PC-3 (cell line): ENCODE measurements at regions of chr3 and their contacts with region 1.

Region 1: GRCh38 chr3:179278932-179279693 is 28.2 kb upstream of the KCNMB3 start:
- DNase-seq: no peak
- ATAC-seq: no peak
- H3K4me3 ChIP-seq: no peak overlapping the region
- H3K27ac ChIP-seq: no peak overlapping the region
- H3K4me1 ChIP-seq: no peaks in the 10 kb centered on the region
- H3K27me3 ChIP-seq: no peaks in the 10 kb centered on the region
- CTCF ChIP-seq: no peak

Region 2: GRCh38 chr3:179174316-179174715 is 104.8 kb before region 1 on chr3:
- CTCF ChIA-PET with region 1: no interaction called
- POLR2A ChIA-PET with region 1: no interaction called
- intact Hi-C with region 1: no loop called
- DNase-seq: no peak
- ATAC-seq: no peak
- H3K4me3 ChIP-seq: no peak overlapping the region
- H3K27ac ChIP-seq: no peak overlapping the region
- H3K4me1 ChIP-seq: no peaks in the 10 kb centered on the region
- H3K27me3 ChIP-seq: no peaks in the 10 kb centered on the region
- CTCF ChIP-seq: no peak

Region 3: DNA sequence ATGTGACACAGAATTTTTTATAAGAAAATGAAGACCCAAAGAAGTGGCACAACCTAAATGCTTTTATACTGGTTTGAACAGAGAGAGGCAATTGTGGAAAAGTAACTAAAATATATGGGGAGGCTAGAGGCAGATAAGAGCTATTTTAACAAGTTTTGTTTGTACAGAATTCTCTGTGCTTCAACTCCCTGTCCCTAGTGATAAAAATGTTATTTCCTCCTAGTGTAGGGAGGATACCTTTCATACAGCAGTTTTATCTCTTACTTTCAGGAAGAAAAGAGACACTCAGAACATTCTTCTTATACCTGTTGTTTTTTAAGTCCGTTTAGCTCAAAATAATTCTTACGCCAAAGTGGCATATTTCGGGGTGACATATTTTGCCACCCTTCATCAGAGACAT is 22.5 kb after region 1 on chr3:
- CTCF ChIA-PET with region 1: interaction called, 3 read pairs
- POLR2A ChIA-PET with region 1: interaction called, 10 read pairs
- intact Hi-C with region 1: no loop called
- DNase-seq: no peak
- ATAC-seq: no peak
- H3K4me3 ChIP-seq: no peak overlapping the region
- H3K27ac ChIP-seq: no peak overlapping the region
- H3K4me1 ChIP-seq: no peaks in the 10 kb centered on the region
- H3K27me3 ChIP-seq: peaks cover 6% of the 10 kb centered on the region; the same call in 1 of the 2 replicates
- CTCF ChIP-seq: no peak